H1 (cell line): ENCODE measurements at regions of chr17 and their contacts with region 1.

Region 1: DNA sequence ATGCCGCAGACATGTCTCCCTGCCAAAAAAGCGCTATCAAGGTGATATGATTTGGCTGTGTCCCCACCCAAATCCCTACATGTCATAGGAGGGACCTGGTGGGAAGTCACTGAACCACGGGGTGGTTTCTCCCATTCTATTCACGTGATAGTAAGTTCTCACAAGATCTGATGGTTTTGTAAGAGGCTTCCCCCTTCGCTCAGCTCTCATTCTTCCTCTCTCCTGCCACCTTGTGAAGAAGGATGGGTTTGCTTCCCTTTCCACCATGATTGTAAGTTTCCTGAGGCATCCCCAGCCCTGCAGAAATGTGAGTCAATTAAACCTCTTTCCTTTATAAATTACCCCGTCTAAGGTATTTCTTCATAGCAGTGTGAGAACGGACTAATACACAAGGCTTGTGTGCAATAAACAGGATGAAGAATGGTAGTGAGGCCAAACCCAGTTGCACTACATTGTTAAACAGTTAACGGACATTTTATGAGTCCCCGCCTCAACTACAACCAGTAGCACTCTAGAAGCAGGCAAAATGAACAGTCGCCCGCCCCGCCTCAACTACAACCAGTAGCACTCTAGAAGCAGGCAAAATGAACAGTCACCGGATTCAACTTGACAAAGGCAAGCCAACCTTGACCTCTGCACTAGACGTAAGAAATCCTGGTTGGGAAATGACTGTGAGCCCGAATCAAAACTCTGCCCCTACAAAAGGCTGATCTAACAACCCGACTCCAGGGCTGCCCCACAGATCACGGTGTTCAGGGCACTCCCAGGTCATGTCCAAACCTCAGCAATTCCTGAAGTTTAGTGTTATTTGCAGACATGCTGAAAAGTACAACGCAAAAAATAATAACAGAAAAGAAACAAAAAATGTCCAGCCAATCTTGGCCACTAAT is 26.3 kb downstream of the VPS53 start:
- DNase-seq: no peak
- H3K4me3 ChIP-seq: no peak overlapping the region
- H3K27ac ChIP-seq: no peak overlapping the region
- H3K4me1 ChIP-seq: no peaks in the 10 kb centered on the region
- H3K27me3 ChIP-seq: no peaks in the 10 kb centered on the region
- CTCF ChIP-seq: peak in 2 of 3 experiments; percentile 41 to 48; a peak in 2 of 4 replicates
- EP300 ChIP-seq: no peak
- POLR2A ChIP-seq: no peak
- RAD21 ChIP-seq: peak; percentile 45 to 55

Region 2: DNA sequence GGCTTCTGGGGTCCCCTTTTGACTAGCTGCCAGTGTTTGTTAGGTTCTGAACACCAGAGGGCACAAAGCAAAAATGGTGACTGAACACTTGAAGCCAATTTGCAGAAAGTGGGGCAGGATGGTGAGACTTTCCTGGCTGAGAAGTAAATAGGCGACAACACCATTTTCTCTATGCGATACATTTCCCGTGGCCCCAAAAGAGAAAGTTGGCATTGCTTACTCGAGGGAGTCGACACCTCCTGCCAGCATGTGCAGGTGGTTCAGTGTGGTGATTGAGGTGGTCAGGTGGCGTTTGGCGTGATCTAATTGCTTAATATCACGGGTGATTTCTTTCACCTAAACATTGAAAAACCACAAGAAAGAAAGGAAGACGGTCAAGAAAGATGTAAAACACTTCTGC is 32.7 kb before region 1 on chr17:
- CTCF ChIA-PET with region 1: interaction called, 17 read pairs
- POLR2A ChIA-PET with region 1: no interaction called
- DNase-seq: no peak
- H3K4me3 ChIP-seq: no peak overlapping the region
- H3K27ac ChIP-seq: no peak overlapping the region
- H3K4me1 ChIP-seq: no peaks in the 10 kb centered on the region
- H3K27me3 ChIP-seq: no peaks in the 10 kb centered on the region
- CTCF ChIP-seq: no peak
- EP300 ChIP-seq: no peak
- POLR2A ChIP-seq: no peak
- RAD21 ChIP-seq: no peak

Region 3: DNA sequence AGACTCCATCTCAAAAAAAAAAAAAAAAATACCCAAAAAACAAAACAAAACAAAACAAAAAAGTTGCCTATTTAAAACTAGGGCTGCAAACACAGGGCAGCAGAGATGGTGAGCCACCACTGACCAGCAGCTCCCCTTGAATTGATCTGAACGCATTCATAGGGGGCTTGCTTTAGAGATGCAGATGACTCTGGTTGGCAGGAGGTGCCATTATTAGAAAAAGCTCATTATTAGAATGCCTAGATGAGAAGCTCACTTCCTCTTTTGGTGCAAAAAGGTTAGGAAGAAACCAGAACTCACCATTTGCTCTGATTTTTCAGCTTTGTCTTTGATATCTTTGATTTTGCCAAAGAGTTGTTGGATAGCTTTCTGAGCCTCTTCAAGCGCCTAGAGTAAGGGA is 26.8 kb before region 1 on chr17:
- CTCF ChIA-PET with region 1: interaction called, 17 read pairs
- POLR2A ChIA-PET with region 1: no interaction called
- DNase-seq: no peak
- H3K4me3 ChIP-seq: no peak overlapping the region
- H3K27ac ChIP-seq: no peak overlapping the region
- H3K4me1 ChIP-seq: peaks cover 0 to 6% (median 3%) of the 10 kb centered on the region in 4 experiments; a peak in 2 of 7 replicates
- H3K27me3 ChIP-seq: no peaks in the 10 kb centered on the region
- CTCF ChIP-seq: no peak
- EP300 ChIP-seq: no peak
- POLR2A ChIP-seq: no peak
- RAD21 ChIP-seq: no peak

Region 4: DNA sequence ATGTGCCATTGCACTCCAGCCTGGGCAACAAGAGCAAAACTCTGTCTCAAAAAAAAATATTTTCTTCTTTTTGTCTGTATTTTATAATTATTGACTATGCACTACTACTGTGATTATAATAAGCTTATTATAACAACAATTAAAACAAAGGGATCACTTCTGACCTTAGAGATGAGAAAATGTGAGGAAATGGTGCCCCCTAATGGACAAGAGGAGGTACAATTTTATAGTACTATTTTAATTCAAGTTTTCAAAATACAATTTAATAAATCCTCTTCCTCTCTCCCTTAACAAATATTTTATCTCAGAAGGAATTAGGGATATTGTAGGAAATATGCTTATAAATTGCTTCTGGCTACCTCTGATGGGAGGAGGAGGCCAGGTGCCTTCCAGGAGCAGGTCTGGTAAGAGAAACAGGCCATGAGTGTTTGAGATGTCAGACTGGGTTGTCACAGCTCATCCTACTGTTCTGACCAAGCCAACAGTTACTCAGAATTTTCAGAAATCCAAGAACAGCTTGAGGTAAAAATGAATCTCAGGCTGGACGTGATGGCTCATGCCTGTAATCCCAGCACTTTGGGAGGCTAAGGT is 12.3 kb after region 1 on chr17:
- CTCF ChIA-PET with region 1: interaction called, 79 read pairs
- POLR2A ChIA-PET with region 1: no interaction called
- DNase-seq: no peak
- H3K4me3 ChIP-seq: no peak overlapping the region
- H3K27ac ChIP-seq: no peak overlapping the region
- H3K4me1 ChIP-seq: no peaks in the 10 kb centered on the region
- H3K27me3 ChIP-seq: no peaks in the 10 kb centered on the region
- CTCF ChIP-seq: peak in 2 of 3 experiments; percentile 8 to 25; a peak in 2 of 4 replicates
- EP300 ChIP-seq: no peak
- POLR2A ChIP-seq: no peak
- RAD21 ChIP-seq: peak in 1 of 2 experiments; percentile 68; a peak in 3 of 4 replicates

Region 5: DNA sequence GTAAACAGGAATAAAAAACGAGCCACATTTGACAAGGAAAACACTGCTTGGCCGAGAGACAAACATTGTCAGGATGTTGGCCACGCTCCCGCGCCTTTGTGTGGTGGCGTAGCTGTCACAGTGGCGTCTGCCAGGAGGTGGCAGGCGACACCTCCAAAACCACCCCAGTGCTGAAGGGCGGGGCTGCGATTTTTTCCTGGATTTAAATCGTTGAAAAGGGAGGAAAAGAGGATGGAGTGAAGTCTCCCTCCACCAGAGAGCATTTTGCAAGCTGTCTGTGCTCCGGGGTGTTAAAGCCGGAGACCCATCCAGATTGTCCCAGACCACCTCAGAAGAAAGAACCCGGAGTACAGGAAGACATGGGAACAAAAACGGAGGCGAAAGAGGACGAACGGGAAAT is 106.5 kb after region 1 on chr17:
- CTCF ChIA-PET with region 1: no interaction called
- POLR2A ChIA-PET with region 1: no interaction called
- DNase-seq: peak in 1 of 2 experiments; percentile 83
- H3K4me3 ChIP-seq: no peak overlapping the region
- H3K27ac ChIP-seq: 0 out of 2 replicates have a peak overlapping the region, but pooled peaks have one; percentile 0
- H3K4me1 ChIP-seq: peaks cover 0 to 13% (median 2%) of the 10 kb centered on the region in 4 experiments; a peak in 5 of 7 replicates
- H3K27me3 ChIP-seq: no peaks in the 10 kb centered on the region
- CTCF ChIP-seq: peak; percentile 86 to 93 (median 92)
- EP300 ChIP-seq: no peak
- POLR2A ChIP-seq: no peak
- RAD21 ChIP-seq: peak; percentile 93 to 95